ENCODE measurements at regions of chr1 and their contacts with region 1.

Region 1: GRCh38 chr1:223700942-223701637 is 11.2 kb upstream of the CAPN2 start:
- DNase-seq: no peak
- H3K4me3 ChIP-seq: no peak overlapping the region
- H3K4me3 Mint-ChIP-seq: no peak overlapping the region
- H3K27ac ChIP-seq: peak overlapping the region; percentile 28
- H3K27ac Mint-ChIP-seq: no peak overlapping the region
- H3K4me1 ChIP-seq: peaks cover 7% of the 10 kb centered on the region
- H3K4me1 Mint-ChIP-seq: peaks cover 3 to 12% (median 11%) of the 10 kb centered on the region in 3 donors
- H3K27me3 ChIP-seq: no peaks in the 10 kb centered on the region
- H3K27me3 Mint-ChIP-seq: peaks cover 0 to 2% of the 10 kb centered on the region in 2 donors

Region 2: DNA sequence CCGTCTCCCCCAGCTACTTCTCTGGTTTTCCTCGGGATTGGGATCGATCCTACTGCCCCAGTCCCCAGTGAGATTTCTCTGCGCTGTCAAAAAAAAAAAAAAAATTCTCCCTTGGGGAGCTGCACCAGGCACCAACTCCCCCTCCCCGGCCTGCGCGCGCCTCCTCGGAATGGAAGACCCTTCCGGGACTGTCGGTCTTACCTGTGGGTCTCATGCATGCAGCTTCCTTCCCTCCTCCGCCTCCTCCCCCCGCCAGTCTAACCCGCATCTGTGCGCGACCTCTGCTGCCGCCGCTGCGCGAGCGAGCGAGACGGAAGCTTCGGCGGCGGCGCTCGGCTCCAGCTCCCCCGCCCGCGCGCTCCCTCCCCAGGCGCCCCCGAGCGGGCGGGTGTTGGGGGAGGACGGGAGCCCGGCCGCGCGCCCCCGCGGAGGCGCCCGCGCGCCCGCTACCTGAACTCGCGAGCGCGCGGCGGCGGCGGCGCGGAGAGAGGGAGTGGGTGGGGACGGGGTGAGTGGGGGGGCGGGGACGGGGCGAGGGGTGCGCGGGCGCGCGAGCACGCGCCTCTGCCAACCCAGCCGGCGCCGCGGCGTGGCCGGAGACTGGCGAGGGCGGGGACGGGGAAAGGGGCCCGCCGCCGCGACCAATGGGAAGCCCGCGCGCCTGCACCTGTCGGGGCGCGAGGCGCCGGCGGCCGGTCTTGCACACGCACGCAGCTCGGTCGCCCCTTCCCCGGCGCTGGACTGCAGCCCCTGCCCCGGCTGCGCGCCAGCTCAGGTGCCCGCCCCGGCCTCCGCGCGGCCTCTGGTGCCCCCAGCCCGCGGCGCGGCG is 337.0 kb before region 1 on chr1 and contains the start of gene SUSD4:
- CTCF ChIA-PET with region 1: no interaction called
- POLR2A ChIA-PET with region 1: no interaction called
- DNase-seq: peak; percentile 37 to 74 (median 60)
- H3K4me3 ChIP-seq: peak within 1 kb of the TSS; percentile 81
- H3K4me3 Mint-ChIP-seq: peak within 1 kb of the TSS; percentile 77 to 95 (median 88)
- H3K27ac ChIP-seq: no peak within 1 kb of the TSS
- H3K27ac Mint-ChIP-seq: peak within 1 kb of the TSS in 6 of 8 donors; percentile 61 to 93 (median 81)
- H3K4me1 ChIP-seq: peaks cover 9% of the 10 kb centered on the region
- H3K4me1 Mint-ChIP-seq: peaks cover 12 to 26% (median 17%) of the 10 kb centered on the region in 3 donors
- H3K27me3 ChIP-seq: peaks cover 3% of the 10 kb centered on the region
- H3K27me3 Mint-ChIP-seq: peaks cover 24 to 56% of the 10 kb centered on the region in 2 donors
- total RNA-seq, gene SUSD4: 0.16 to 0.18 TPM

Region 3: DNA sequence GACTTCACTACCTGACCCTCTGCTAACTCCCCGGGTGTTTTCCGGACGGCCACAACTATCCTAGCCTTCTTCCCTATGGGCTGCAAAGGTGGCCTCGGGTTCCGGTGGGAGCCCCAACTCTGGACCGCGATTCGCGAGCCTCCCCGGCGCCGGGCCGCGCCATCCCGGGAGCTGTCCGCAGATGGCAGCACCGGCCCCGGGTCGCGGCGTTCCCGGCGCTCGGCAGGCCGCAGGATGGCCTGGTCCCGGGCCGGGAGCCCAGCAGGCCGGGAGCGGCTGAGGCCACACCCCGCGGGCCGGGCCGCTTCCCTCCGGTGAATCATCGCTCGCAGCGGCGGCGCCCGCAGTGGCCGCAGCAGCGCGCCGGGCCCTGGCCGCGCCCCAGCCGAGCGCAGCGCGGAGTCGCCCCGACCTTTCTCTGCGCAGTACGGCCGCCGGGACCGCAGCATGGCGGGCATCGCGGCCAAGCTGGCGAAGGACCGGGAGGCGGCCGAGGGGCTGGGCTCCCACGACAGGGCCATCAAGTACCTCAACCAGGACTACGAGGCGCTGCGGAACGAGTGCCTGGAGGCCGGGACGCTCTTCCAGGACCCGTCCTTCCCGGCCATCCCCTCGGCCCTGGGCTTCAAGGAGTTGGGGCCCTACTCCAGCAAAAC is 11.2 kb after region 1 on chr1 and contains the start of gene CAPN2:
- CTCF ChIA-PET with region 1: interaction called, 13 read pairs
- POLR2A ChIA-PET with region 1: no interaction called
- DNase-seq: peak; percentile 53 to 72 (median 59)
- H3K4me3 ChIP-seq: peak within 1 kb of the TSS; percentile 78
- H3K4me3 Mint-ChIP-seq: peak within 1 kb of the TSS; percentile 85 to 98 (median 92)
- H3K27ac ChIP-seq: peak within 1 kb of the TSS; percentile 72
- H3K27ac Mint-ChIP-seq: peak within 1 kb of the TSS; percentile 80 to 99 (median 94)
- H3K4me1 ChIP-seq: peaks cover 66% of the 10 kb centered on the region
- H3K4me1 Mint-ChIP-seq: peaks cover 55 to 70% (median 56%) of the 10 kb centered on the region in 3 donors
- H3K27me3 ChIP-seq: no peaks in the 10 kb centered on the region
- H3K27me3 Mint-ChIP-seq: no peaks in the 10 kb centered on the region
- total RNA-seq, gene CAPN2: 79.8 to 82.9 TPM

Region 4: DNA sequence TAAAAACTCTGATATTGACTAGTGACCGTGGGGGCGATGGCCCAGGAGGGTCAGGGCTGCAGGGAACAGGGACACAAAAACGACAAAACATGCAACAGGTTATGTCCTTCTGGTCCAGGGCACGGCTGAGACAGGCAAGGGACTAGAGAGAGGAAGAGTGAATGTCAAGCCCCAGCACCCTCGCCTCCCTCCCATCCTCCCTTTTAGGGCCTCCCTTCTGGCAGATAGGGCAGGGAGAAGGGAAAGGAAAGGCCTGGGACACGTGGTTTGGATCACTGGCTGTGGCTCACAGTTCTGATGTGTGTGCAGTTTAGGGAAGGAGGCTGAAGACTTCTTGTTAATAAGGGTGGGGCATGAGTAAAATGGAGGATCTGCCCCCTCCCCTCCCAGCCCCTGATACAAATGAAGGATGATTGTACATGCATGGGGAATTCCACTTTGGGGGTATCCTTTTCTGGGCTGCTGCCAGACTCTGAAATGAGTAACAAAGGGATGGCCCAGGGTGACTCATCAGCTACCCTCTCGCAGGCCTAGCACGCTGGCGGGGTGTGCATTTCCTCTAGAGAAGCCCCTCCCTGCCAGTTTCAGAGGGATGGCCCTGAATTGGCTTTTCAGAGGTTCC is 25.4 kb after region 1 on chr1:
- CTCF ChIA-PET with region 1: interaction called, 14 read pairs
- POLR2A ChIA-PET with region 1: interaction called, 20 read pairs
- DNase-seq: peak; percentile 48 to 95 (median 81)
- H3K4me3 ChIP-seq: peak overlapping the region; percentile 18
- H3K4me3 Mint-ChIP-seq: peak overlapping the region; percentile 32 to 89 (median 84)
- H3K27ac ChIP-seq: peak overlapping the region; percentile 64
- H3K27ac Mint-ChIP-seq: peak overlapping the region; percentile 85 to 100 (median 96)
- H3K4me1 ChIP-seq: peaks cover 45% of the 10 kb centered on the region
- H3K4me1 Mint-ChIP-seq: peaks cover 73 to 94% (median 88%) of the 10 kb centered on the region in 3 donors
- H3K27me3 ChIP-seq: no peaks in the 10 kb centered on the region
- H3K27me3 Mint-ChIP-seq: no peaks in the 10 kb centered on the region